ENCODE measurements at regions of chr2 and their contacts with region 1.

Region 1: DNA sequence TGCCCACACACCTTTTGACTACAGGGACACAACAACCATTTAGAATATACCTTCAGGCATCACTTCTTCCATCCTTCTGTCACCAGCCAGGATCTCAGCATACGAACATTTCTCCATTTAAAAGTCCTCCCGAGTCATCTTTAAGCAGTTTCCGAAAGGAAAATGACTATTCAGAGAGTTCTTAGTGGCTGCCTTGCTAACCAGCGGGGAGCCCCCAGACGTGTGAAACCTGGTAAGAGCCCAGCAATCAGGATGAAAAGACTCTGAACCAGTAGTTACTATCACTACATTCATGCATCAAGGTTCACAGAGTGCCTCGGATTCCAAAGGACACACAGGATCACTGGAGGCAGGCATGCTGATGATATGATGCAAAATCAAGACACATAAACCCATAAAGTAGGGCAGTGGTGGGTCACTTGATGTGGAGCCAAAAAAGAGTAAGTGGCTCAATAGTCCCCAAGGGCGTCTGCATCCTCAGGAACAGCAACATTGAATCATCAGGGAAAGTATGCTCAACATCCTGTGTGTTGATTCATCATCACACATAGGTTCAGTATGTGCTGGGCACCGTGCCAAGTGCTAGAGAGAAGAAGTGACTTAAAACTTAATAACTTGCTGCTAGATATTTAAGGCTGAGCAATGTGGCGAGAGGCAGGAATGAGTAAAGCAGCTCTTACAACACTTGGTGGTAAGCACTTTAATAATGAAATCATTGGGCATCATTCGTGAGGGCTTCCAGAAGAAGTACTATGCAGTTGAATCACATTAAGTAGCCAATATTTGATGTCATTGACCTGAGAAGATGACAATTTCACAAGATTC is 4.4 kb downstream of the CCL20 start:
- DNase-seq: peak; percentile 93
- ATAC-seq: peak; percentile 81
- H3K4me3 Mint-ChIP-seq: peak overlapping the region; percentile 6
- H3K27ac Mint-ChIP-seq: peak overlapping the region; percentile 70
- H3K4me1 Mint-ChIP-seq: peaks cover 32% of the 10 kb centered on the region
- H3K27me3 Mint-ChIP-seq: peaks cover 23% of the 10 kb centered on the region

Region 2: GRCh38 chr2:227324995-227325838 is 492.8 kb before region 1 on chr2 and contains the start of gene MFF:
- CTCF ChIA-PET with region 1: no interaction called
- POLR2A ChIA-PET with region 1: no interaction called
- intact Hi-C with region 1: loop called in 1 of 2 experiments (anchors 1 kb)
- DNase-seq: peak; percentile 97
- ATAC-seq: peak; percentile 97
- H3K4me3 Mint-ChIP-seq: peak within 1 kb of the TSS; percentile 89
- H3K27ac Mint-ChIP-seq: peak within 1 kb of the TSS; percentile 91
- H3K4me1 Mint-ChIP-seq: peaks cover 27% of the 10 kb centered on the region
- H3K27me3 Mint-ChIP-seq: no peaks in the 10 kb centered on the region
- total RNA-seq, gene MFF: 78.3 to 104 TPM

Region 3: GRCh38 chr2:227411320-227411989 is 406.6 kb before region 1 on chr2:
- CTCF ChIA-PET with region 1: no interaction called
- POLR2A ChIA-PET with region 1: no interaction called
- intact Hi-C with region 1: loop called in 1 of 2 experiments (anchors 1 kb)
- DNase-seq: peak; percentile 80
- ATAC-seq: peak; percentile 87
- H3K4me3 Mint-ChIP-seq: peak overlapping the region; percentile 12
- H3K27ac Mint-ChIP-seq: peak overlapping the region; percentile 92
- H3K4me1 Mint-ChIP-seq: peaks cover 66% of the 10 kb centered on the region
- H3K27me3 Mint-ChIP-seq: no peaks in the 10 kb centered on the region

Region 4: GRCh38 chr2:227774011-227774624 is 43.9 kb before region 1 on chr2:
- CTCF ChIA-PET with region 1: interaction called, 5 read pairs
- POLR2A ChIA-PET with region 1: no interaction called
- intact Hi-C with region 1: loop called in 1 of 2 experiments (anchors 2 kb)
- DNase-seq: peak; percentile 38
- ATAC-seq: peak; percentile 58
- H3K4me3 Mint-ChIP-seq: no peak overlapping the region
- H3K27ac Mint-ChIP-seq: no peak overlapping the region
- H3K4me1 Mint-ChIP-seq: peaks cover 17% of the 10 kb centered on the region
- H3K27me3 Mint-ChIP-seq: no peaks in the 10 kb centered on the region

Region 5: DNA sequence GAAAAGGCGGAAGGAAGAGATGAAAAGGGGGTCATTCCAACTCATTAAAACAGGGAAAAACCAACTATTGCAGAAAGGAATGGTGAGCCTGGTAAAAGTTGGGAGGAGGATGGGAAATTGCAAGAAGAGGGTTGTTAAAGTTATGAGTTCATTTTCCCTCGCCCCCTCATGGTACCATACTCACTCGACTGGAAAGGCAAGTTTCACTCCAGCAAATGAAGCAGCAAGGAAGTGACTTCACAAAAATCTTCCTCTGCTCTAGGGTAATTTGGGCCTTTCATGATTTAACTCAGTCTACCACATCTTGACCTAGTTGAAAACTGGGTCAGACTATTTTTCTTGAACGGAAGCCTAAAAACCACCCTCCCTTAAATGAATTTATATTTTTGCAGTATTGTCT is 30.5 kb after region 1 on chr2:
- CTCF ChIA-PET with region 1: no interaction called
- POLR2A ChIA-PET with region 1: no interaction called
- intact Hi-C with region 1: loop called (anchors 1 to 2 kb)
- DNase-seq: no peak
- ATAC-seq: peak; percentile 82
- H3K4me3 Mint-ChIP-seq: peak overlapping the region; percentile 29
- H3K27ac Mint-ChIP-seq: peak overlapping the region; percentile 72
- H3K4me1 Mint-ChIP-seq: peaks cover 16% of the 10 kb centered on the region
- H3K27me3 Mint-ChIP-seq: peaks cover 10% of the 10 kb centered on the region

Region 6: GRCh38 chr2:227881866-227882517 is 63.9 kb after region 1 on chr2:
- CTCF ChIA-PET with region 1: no interaction called
- POLR2A ChIA-PET with region 1: no interaction called
- intact Hi-C with region 1: no loop called
- DNase-seq: no peak
- ATAC-seq: no peak
- H3K4me3 Mint-ChIP-seq: no peak overlapping the region
- H3K27ac Mint-ChIP-seq: no peak overlapping the region
- H3K4me1 Mint-ChIP-seq: no peaks in the 10 kb centered on the region
- H3K27me3 Mint-ChIP-seq: peaks cover 6% of the 10 kb centered on the region

Region 7: DNA sequence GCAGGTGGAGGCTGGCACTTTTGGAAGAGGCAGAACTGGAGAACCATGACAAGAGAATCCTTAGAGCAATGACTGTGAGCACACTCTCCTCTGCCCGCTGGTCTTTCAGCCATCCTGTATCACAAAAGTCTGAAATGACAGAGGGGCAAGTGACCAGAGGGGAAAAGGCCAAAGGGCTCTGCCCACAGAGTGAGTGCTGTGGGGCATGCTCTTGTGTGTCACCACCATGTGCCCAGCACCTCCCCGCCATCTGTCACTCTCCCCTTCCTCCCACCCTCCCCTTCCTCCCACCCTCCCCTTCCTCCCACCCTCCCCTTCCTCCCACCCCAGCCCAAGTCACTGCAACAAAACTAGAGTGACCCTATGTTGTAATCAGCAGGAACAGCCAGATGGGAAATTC is 85.3 kb after region 1 on chr2:
- CTCF ChIA-PET with region 1: no interaction called
- POLR2A ChIA-PET with region 1: no interaction called
- intact Hi-C with region 1: no loop called
- DNase-seq: no peak
- ATAC-seq: no peak
- H3K4me3 Mint-ChIP-seq: no peak overlapping the region
- H3K27ac Mint-ChIP-seq: no peak overlapping the region
- H3K4me1 Mint-ChIP-seq: no peaks in the 10 kb centered on the region
- H3K27me3 Mint-ChIP-seq: peaks cover 2% of the 10 kb centered on the region

Measured in activated CD4-positive, alpha-beta T cell treated with anti-CD3 and anti-CD28 coated beads for 36 hours (primary cell).